Activated T-helper 1 cell treated with anti-CD3 and anti-CD28 coated beads, Interleukin-12 subunit alpha, Interleukin-12 subunit beta, Interleukin-2, Interleukin-4 antibody, amounts not matched to agents 30 ng/mL and 10 ng/mL and 1 ng/mL, durations not matched to agents 14 hours and 24 hours and 36 hours (primary cell): ENCODE measurements at regions of chr13 and their contacts with region 1.

Region 1: DNA sequence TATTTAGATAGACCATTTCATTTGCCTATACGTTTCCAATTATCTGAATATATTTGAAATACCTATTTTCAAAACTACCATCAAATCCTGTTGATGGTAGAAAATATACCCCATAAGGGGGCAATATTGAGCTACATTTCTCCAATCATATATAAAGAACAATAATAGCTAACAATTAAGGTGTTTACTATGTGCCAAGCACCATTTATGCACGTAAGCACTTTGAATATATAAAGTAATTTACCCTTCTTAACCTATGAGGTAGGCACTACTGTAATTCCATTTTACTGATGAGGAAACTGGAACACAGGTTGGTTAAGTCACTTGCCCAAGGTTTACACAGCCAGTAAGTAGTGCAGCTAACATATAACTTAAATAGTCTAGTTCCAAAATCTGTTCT is 79.2 kb downstream of the UBL3 start:
- DNase-seq: no peak
- H3K4me3 Mint-ChIP-seq: no peak overlapping the region
- H3K27ac Mint-ChIP-seq: no peak overlapping the region
- H3K4me1 Mint-ChIP-seq: no peaks in the 10 kb centered on the region
- H3K27me3 Mint-ChIP-seq: no peaks in the 10 kb centered on the region

Region 2: DNA sequence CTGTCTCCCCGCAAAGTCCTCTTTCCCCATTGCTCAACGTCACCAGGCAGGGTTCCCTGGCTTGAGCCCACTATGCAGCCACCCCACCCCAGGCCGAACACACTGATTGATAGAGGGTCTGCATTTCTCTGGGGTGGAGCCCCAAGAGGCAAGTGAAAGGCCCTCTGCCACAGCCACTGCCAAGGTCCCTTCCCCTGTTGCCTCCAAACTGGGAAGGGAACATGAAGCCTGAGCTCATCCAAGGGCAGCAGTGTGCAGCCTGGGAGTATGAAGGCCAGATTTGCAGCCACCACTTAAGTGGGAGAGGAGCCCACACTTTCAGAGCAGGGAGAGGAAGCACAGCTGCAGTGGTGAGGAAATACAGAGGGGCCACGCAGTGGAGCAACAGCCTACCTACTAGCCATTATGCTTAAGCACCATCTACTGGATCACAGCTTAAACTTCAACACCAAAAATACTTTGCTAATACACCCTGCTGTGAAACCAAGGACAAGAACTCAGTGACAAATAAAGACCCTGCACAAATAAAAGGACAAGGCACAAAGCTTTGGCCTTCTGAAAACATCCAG is 30.6 kb after region 1 on chr13:
- intact Hi-C with region 1: no loop called
- DNase-seq: no peak
- H3K4me3 Mint-ChIP-seq: no peak overlapping the region
- H3K27ac Mint-ChIP-seq: no peak overlapping the region
- H3K4me1 Mint-ChIP-seq: peaks cover 7% of the 10 kb centered on the region
- H3K27me3 Mint-ChIP-seq: peaks cover 2% of the 10 kb centered on the region

Region 3: GRCh38 chr13:29923554-29924481 is 152.6 kb after region 1 on chr13:
- intact Hi-C with region 1: loop called (anchors 1 kb)
- DNase-seq: peak; percentile 14
- H3K4me3 Mint-ChIP-seq: no peak overlapping the region
- H3K27ac Mint-ChIP-seq: no peak overlapping the region
- H3K4me1 Mint-ChIP-seq: peaks cover 31% of the 10 kb centered on the region
- H3K27me3 Mint-ChIP-seq: peaks cover 10% of the 10 kb centered on the region